K562 (cell line): ENCODE measurements at regions of chr12 and their contacts with region 1.

Region 1: GRCh38 chr12:45170456-45171042 is 45.3 kb upstream of the ANO6 start:
- DNase-seq: peak; percentile 69 to 83 (median 78)
- ATAC-seq: peak; percentile 93
- H3K4me3 ChIP-seq: no peak overlapping the region
- H3K27ac ChIP-seq: no peak overlapping the region
- H3K4me1 ChIP-seq: peaks cover 0 to 3% of the 10 kb centered on the region in 2 experiments; a peak in 1 of 5 replicates
- H3K27me3 ChIP-seq: no peaks in the 10 kb centered on the region
- CTCF ChIP-seq: peak; percentile 78 to 87 (median 86)
- EP300 ChIP-seq: no peak
- POLR2A ChIP-seq: no peak
- RAD21 ChIP-seq: peak; percentile 81 to 89

Region 2: DNA sequence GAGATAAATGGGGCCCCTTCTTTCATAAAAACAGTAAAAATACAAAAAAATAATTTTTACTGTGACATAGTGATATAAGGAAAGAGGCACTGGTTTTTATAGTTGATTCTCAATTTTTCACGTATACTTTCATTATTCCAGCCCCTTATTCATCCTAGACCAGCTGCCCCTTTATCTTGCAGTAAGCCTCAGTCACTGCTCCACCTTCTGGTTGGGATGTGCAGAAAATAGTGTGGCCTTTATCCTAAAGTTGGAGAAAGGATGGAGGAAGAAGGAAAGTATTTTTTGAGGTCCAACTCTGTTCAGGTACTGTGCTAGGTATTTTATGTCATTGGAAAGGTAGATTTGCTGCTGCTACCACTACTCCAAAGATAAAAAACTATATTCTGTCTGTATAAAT is 218.0 kb after region 1 on chr12:
- CTCF ChIA-PET with region 1: interaction called, 3 read pairs
- POLR2A ChIA-PET with region 1: no interaction called
- in situ Hi-C with region 1: no loop called
- intact Hi-C with region 1: loop called (anchors 5 kb)
- DNase-seq: peak in 3 of 4 experiments; percentile 16 to 36 (median 32)
- ATAC-seq: peak; percentile 62; the same call in 2 of the 3 replicates
- H3K4me3 ChIP-seq: no peak overlapping the region
- H3K27ac ChIP-seq: no peak overlapping the region
- H3K4me1 ChIP-seq: no peaks in the 10 kb centered on the region
- H3K27me3 ChIP-seq: no peaks in the 10 kb centered on the region
- CTCF ChIP-seq: peak; percentile 37 to 59 (median 57); a peak in 3 of 6 replicates
- EP300 ChIP-seq: no peak
- POLR2A ChIP-seq: no peak
- RAD21 ChIP-seq: peak; percentile 59 to 65

Region 3: GRCh38 chr12:45435945-45436710 is 265.6 kb after region 1 on chr12:
- CTCF ChIA-PET with region 1: no interaction called
- POLR2A ChIA-PET with region 1: no interaction called
- in situ Hi-C with region 1: no loop called
- intact Hi-C with region 1: loop called (anchors 10 kb)
- DNase-seq: no peak
- ATAC-seq: peak; percentile 56; the same call in 2 of the 3 replicates
- H3K4me3 ChIP-seq: no peak overlapping the region
- H3K27ac ChIP-seq: no peak overlapping the region
- H3K4me1 ChIP-seq: no peaks in the 10 kb centered on the region
- H3K27me3 ChIP-seq: no peaks in the 10 kb centered on the region
- CTCF ChIP-seq: no peak
- EP300 ChIP-seq: no peak
- POLR2A ChIP-seq: no peak
- RAD21 ChIP-seq: no peak

Region 4: DNA sequence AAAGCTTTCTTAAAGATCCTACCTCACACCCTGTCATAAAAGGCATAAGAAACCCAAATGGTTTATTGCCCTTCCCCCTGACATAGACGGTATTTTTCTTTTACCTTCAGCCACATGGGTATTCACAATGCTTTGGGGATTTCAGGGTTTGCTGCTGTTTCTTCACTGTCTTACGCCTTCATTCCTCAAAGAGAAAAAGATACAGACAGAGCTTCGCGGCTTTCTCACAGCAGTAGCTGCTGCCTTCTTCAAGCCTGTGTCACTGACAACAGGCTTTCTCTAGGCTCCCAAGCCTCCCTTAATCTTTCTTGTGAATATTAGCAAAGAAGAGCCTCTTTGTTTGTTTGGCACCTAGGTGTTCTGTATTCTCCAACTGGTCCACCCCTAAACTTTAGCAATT is 361.6 kb after region 1 on chr12:
- CTCF ChIA-PET with region 1: no interaction called
- POLR2A ChIA-PET with region 1: no interaction called
- in situ Hi-C with region 1: no loop called
- intact Hi-C with region 1: loop called (anchors 10 kb)
- DNase-seq: no peak
- ATAC-seq: peak; percentile 59
- H3K4me3 ChIP-seq: no peak overlapping the region
- H3K27ac ChIP-seq: no peak overlapping the region
- H3K4me1 ChIP-seq: no peaks in the 10 kb centered on the region
- H3K27me3 ChIP-seq: no peaks in the 10 kb centered on the region
- CTCF ChIP-seq: no peak
- EP300 ChIP-seq: no peak
- POLR2A ChIP-seq: no peak
- RAD21 ChIP-seq: no peak